Calu3 (cell line): ENCODE measurements at regions of chr11 and their contacts with region 1.

Region 1: GRCh38 chr11:129364143-129364654 is 11.4 kb upstream of the BARX2 start:
- DNase-seq: peak; percentile 88
- H3K4me3 Mint-ChIP-seq: no peak overlapping the region
- H3K27ac Mint-ChIP-seq: no peak overlapping the region
- H3K4me1 Mint-ChIP-seq: peaks cover 24% of the 10 kb centered on the region
- H3K27me3 Mint-ChIP-seq: no peaks in the 10 kb centered on the region
- CTCF ChIP-seq: peak; percentile 92

Region 2: DNA sequence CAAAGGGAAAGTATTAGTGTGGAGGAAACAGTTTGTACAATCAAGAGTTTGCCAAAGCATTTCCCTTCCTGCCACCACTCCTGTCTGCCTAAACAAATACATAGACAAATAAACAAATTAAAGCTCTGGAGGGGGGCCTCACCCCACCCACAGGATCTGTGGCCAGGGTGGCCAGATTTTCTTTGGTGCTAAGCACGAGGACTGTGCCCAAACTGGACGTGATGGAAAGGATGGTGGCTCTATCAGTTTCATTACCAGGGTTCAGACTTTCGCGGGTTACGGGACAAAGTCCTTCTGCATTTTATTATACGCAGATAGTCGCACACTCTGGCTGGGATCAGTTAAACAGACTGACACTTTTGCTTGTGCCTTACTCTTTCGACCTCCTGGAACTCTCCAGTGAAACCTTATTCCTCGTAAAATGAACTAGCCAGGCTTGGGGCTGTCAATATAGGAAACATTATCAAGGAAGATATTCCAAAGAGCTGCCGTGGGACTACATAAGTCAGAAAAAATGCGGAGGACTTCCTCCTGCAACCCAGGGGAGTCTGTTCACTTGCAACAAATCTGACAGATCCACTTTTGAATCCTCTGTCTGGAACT is 22.7 kb after region 1 on chr11:
- CTCF ChIA-PET with region 1: interaction called, 9 read pairs
- intact Hi-C with region 1: loop called (anchors 2 kb)
- DNase-seq: no peak
- H3K4me3 Mint-ChIP-seq: peak overlapping the region; percentile 67
- H3K27ac Mint-ChIP-seq: peak overlapping the region; percentile 90
- H3K4me1 Mint-ChIP-seq: peaks cover 85% of the 10 kb centered on the region
- H3K27me3 Mint-ChIP-seq: no peaks in the 10 kb centered on the region
- CTCF ChIP-seq: no peak

Region 3: DNA sequence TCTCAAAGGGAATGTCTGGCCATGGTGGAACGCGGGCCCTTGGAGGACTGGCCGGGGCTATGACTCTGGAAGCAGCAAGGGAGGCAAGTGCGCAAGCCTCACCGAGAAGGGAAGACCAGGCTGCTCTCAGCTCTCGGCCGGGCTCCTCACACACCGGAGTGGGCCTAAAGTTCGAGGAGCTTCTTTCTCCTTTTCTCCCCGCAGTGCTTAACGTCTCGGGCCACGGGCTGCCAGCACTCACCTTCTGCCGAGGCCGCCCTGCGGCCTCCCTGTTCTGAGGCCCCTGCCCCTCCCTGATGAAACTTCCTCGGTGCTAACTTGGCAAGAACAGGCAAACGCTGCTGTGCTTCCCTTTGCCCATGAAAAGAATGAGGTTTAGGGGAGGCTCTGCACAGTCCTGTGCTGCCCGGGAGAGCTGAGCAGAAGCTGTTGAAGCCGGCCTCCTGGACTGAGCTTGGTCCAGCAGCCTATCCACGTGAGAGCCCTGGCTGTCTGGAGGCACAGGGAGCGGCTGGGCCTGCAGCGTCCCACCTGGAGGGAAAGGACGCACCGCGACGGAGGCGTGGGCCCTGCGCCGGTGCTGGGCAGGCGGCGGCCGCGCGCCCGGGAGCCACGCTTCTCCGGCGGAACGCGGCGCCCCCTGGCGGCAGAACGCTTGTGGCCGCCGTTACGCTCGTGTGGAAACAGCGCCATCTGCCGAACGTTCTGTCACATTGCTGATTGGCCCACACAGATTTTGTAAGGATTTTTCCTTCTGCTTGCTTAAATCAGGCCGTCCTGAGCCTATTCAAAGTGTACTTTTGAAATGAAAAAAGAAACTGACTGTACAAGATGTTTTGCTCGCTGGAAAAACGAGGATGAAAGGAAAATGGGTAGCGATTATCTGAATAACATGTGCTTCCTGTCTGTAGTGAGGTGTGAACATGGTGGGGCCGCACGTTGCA is 386.4 kb after region 1 on chr11:
- CTCF ChIA-PET with region 1: interaction called, 13 read pairs
- intact Hi-C with region 1: loop called (anchors 1 kb)
- DNase-seq: peak; percentile 81
- H3K4me3 Mint-ChIP-seq: peak overlapping the region; percentile 41
- H3K27ac Mint-ChIP-seq: no peak overlapping the region
- H3K4me1 Mint-ChIP-seq: no peaks in the 10 kb centered on the region
- H3K27me3 Mint-ChIP-seq: no peaks in the 10 kb centered on the region
- CTCF ChIP-seq: peak; percentile 98